A549 (cell line): ENCODE measurements at regions of chr21 and their contacts with region 1.

Region 1: DNA sequence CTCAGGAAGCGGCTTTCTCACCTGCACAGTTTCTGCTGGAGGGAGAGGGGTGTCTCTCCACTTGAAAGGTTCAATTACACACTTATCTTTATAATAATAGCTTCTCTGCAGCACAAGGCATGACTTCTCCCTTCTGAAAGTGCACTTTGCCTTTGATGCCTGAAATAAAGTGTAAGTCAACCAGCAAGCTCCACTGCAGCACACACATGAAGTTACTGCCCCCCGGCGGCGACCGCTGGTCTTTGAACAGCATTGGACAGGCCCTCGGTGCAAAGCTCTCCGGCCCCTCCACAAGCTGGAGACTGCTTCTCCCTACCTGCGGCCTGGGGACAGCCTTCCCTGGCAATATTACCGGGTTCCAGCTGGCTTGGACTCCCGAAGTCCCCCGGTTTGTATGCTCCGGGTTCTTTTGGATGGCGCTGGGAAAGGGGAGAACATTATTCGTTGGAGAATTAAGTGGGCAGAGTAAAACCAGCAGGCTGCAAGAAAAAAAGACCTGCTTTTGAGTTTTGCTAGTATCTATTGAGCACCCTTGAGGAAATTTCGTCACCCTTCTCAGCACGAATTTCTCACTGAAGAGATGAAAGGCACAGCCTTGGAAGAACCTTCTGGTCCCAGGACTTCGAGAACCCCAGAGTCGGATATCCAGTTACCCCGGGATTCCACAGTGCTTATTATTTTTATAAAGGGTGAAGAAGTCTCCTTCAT is 11.8 kb downstream of the RCAN1 start:
- DNase-seq: peak; percentile 27 to 63
- ATAC-seq: peak; percentile 93 to 98
- H3K4me3 ChIP-seq: no peak overlapping the region
- H3K27ac ChIP-seq: no peak overlapping the region
- H3K4me1 ChIP-seq: peaks cover 5% of the 10 kb centered on the region; the same call in 1 of the 3 replicates
- CTCF ChIP-seq: peak; percentile 65
- EP300 ChIP-seq: no peak
- POLR2A ChIP-seq: no peak
- RAD21 ChIP-seq: peak; percentile 77 to 81

Region 2: GRCh38 chr21:34362136-34362444 is 241.1 kb before region 1 on chr21:
- CTCF ChIA-PET with region 1: interaction called, 11 read pairs
- POLR2A ChIA-PET with region 1: no interaction called
- DNase-seq: no peak
- ATAC-seq: peak in 1 of 2 experiments; percentile 23; a peak in 2 of 6 replicates
- H3K4me3 ChIP-seq: no peak overlapping the region
- H3K27ac ChIP-seq: no peak overlapping the region
- H3K4me1 ChIP-seq: 0 out of 3 replicates have a peak, but pooled peaks cover 2% of the 10 kb centered on the region
- CTCF ChIP-seq: no peak; the same call in 2 of the 3 replicates
- EP300 ChIP-seq: no peak
- POLR2A ChIP-seq: no peak
- RAD21 ChIP-seq: no peak; a peak in 1 of 5 replicates

Region 3: DNA sequence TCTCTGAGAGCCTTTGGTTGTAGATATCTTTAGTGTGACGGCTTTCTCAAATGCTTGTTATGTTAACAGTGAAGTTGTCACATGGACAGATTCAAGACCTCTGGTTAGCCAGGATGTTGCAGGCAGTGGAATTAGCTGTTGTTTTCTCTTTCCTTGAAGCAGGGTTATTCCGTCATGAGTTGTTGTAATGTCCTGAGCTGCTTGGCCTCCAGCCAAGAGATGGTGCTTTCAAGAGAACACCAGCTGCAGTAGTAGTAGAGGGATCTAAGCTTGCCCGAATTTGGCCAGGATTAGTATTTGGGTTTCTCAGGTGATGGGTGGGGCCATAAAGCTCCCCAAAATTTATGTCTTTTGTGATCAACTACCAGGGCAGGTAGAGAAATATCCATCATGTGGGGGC is 104.5 kb before region 1 on chr21:
- CTCF ChIA-PET with region 1: interaction called, 11 read pairs
- POLR2A ChIA-PET with region 1: no interaction called
- DNase-seq: no peak
- ATAC-seq: no peak
- H3K4me3 ChIP-seq: no peak overlapping the region
- H3K27ac ChIP-seq: no peak overlapping the region
- H3K4me1 ChIP-seq: no peaks in the 10 kb centered on the region
- CTCF ChIP-seq: no peak
- EP300 ChIP-seq: no peak
- POLR2A ChIP-seq: no peak
- RAD21 ChIP-seq: no peak

Region 4: DNA sequence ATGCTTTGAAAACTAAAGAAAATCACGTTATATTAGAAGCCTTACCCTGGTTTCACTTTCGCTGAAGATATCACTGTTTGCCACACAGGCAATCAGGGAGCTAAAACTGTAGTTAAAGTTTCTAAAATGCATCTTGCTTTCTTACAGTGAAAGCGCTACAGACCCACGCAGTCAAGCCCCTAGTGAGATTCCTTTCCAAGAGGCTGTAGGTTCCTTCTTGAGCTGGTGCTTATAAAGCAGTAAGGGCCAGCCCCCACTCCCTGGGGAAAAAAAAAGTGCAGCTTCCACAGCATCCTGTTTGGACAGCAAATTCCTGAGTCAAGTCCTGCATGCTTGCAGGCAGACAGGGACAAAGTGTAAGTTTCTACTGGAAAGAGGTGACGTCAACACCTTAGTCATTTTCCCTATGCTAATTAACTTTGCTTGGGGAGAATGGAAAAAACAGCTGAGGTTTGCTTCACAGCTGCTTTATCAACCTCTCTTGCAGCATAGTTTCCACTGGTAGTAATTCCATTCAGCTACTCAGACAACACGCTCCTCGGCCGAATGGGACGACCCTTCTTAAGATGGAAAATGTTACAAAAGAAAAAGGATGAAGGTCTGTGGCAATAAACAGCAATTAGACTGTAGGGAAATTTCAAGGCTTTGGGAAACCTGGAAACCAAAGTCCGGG is 76.4 kb before region 1 on chr21:
- CTCF ChIA-PET with region 1: interaction called, 15 read pairs
- POLR2A ChIA-PET with region 1: interaction called, 3 read pairs
- DNase-seq: peak; percentile 78 to 93
- ATAC-seq: peak; percentile 97
- H3K4me3 ChIP-seq: peak overlapping the region; percentile 49
- H3K27ac ChIP-seq: peak overlapping the region; percentile 85 to 89
- H3K4me1 ChIP-seq: peaks cover 42% of the 10 kb centered on the region
- CTCF ChIP-seq: no peak
- EP300 ChIP-seq: no peak; a peak in 1 of 5 replicates
- POLR2A ChIP-seq: no peak
- RAD21 ChIP-seq: no peak

Region 5: GRCh38 chr21:34613679-34614632 is 10.8 kb after region 1 on chr21:
- CTCF ChIA-PET with region 1: interaction called, 25 read pairs
- POLR2A ChIA-PET with region 1: interaction called, 4 read pairs
- DNase-seq: no peak
- ATAC-seq: no peak
- H3K4me3 ChIP-seq: peak overlapping the region; percentile 93
- H3K27ac ChIP-seq: peak overlapping the region; percentile 75 to 92; a peak in 5 of 6 replicates
- H3K4me1 ChIP-seq: peaks cover 3% of the 10 kb centered on the region; the same call in 1 of the 3 replicates
- CTCF ChIP-seq: no peak
- EP300 ChIP-seq: no peak
- POLR2A ChIP-seq: no peak
- RAD21 ChIP-seq: no peak

Region 6: GRCh38 chr21:34625030-34625593 is 22.0 kb after region 1 on chr21:
- CTCF ChIA-PET with region 1: interaction called, 24 read pairs
- POLR2A ChIA-PET with region 1: no interaction called
- DNase-seq: no peak
- ATAC-seq: no peak
- H3K4me3 ChIP-seq: no peak overlapping the region
- H3K27ac ChIP-seq: no peak overlapping the region
- H3K4me1 ChIP-seq: no peaks in the 10 kb centered on the region
- CTCF ChIP-seq: no peak
- EP300 ChIP-seq: no peak
- POLR2A ChIP-seq: no peak
- RAD21 ChIP-seq: no peak

Region 7: GRCh38 chr21:34630536-34631143 is 27.5 kb after region 1 on chr21:
- CTCF ChIA-PET with region 1: interaction called, 24 read pairs
- POLR2A ChIA-PET with region 1: no interaction called
- DNase-seq: peak; percentile 40 to 41
- ATAC-seq: peak; percentile 56 to 82; a peak in 4 of 6 replicates
- H3K4me3 ChIP-seq: no peak overlapping the region
- H3K27ac ChIP-seq: no peak overlapping the region
- H3K4me1 ChIP-seq: no peaks in the 10 kb centered on the region
- CTCF ChIP-seq: peak; percentile 66
- EP300 ChIP-seq: no peak
- POLR2A ChIP-seq: no peak
- RAD21 ChIP-seq: peak; percentile 77 to 80